Sigmoid colon (tissue), 7 donors: ENCODE measurements at regions of chr22 and their contacts with region 1.

Region 1: GRCh38 chr22:26894766-26895485 is 237.5 kb downstream of the MIAT start:
- DNase-seq: no peak
- H3K4me3 ChIP-seq: no peak overlapping the region
- H3K27ac ChIP-seq: peak overlapping the region; percentile 26 to 79 (median 76)
- H3K4me1 ChIP-seq: peaks cover 0 to 41% (median 27%) of the 10 kb centered on the region in 4 donors
- H3K27me3 ChIP-seq: no peaks in the 10 kb centered on the region
- CTCF ChIP-seq: no peak
- EP300 ChIP-seq: no peak
- POLR2A ChIP-seq: no peak

Region 2: DNA sequence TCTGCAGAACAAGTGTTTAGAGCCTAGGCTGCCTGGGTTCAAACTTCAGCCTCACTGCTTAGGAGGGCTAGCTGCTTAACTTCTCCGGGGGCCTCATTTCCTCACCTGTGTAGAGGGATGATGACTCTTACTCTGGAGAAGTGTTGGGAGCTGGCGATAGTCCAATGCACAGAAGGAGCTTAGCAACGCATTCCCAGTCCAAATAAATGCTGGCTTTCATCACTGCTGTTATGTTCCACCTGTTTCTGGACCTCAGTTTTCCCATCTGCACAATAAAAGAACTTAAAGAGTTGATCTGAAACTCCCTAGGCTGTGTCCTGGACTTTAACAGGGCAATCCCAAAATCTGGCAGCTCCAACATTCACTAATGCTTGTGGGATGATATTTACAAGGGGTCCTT is 100.3 kb after region 1 on chr22:
- intact Hi-C with region 1: loop called (anchors 5 kb)
- DNase-seq: peak; percentile 84
- H3K4me3 ChIP-seq: no peak overlapping the region
- H3K27ac ChIP-seq: peak overlapping the region in 2 of 4 donors; percentile 8 to 26
- H3K4me1 ChIP-seq: peaks cover 0 to 31% (median 23%) of the 10 kb centered on the region in 4 donors
- H3K27me3 ChIP-seq: no peaks in the 10 kb centered on the region
- CTCF ChIP-seq: no peak
- EP300 ChIP-seq: no peak
- POLR2A ChIP-seq: no peak